ENCODE measurements at regions of chr1 and their contacts with region 1.

Region 1: DNA sequence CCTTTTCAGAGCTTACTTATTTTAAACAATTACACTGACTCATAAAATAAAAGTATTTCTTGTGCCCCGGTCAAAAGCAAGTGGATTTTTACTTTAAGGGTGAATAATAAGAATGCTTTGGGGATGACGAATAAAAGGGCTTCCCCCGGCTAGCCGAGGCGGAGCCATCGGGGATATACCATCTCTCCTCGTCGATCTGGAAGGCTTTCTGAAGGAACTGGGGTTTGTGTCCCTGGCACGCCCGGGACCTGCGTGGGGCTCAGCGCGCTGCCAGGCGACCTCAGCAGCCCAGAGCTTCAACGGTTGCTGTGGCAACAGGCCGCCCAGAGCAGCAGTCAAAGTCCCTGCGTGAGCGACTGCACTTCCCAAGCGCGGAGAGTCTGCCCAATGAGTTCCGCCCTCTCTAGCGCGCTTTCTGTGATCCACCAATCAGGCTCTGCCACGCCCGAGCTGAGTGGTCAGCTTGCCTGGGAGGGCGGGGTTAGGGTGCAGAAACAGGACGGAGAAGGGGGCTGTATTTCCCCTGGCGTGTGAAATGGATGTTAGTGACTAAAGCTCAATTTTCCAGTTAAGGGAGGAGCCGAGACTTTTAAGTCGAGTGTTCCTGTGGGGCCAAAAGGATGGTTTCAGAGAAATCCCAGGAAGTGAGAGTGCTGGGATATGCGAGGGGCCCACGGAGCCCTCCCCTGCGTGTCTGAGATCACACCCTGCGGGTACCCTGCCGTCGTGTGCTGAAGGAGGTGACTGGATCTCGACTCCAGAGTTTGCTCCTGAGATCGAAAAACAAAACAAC is 33.0 kb upstream of the MGST3 start:
- DNase-seq: peak; percentile 98
- H3K4me3 ChIP-seq: peak overlapping the region; percentile 50 to 57 (median 53)
- H3K27ac ChIP-seq: peak overlapping the region; percentile 66 to 76 (median 74)
- H3K4me1 ChIP-seq: peaks cover 0 to 12% (median 5%) of the 10 kb centered on the region in 4 donors
- H3K27me3 ChIP-seq: peaks cover 0 to 11% (median 0%) of the 10 kb centered on the region in 3 donors
- CTCF ChIP-seq: no peak
- EP300 ChIP-seq: no peak
- POLR2A ChIP-seq: peak in 1 of 2 donors; percentile 39

Region 2: GRCh38 chr1:165367375-165367993 is 230.6 kb before region 1 on chr1:
- intact Hi-C with region 1: loop called (anchors 2 kb)
- DNase-seq: peak; percentile 90
- H3K4me3 ChIP-seq: no peak overlapping the region
- H3K27ac ChIP-seq: no peak overlapping the region
- H3K4me1 ChIP-seq: peaks cover 0 to 8% (median 4%) of the 10 kb centered on the region in 4 donors
- H3K27me3 ChIP-seq: no peaks in the 10 kb centered on the region
- CTCF ChIP-seq: peak; percentile 51 to 98 (median 82)
- EP300 ChIP-seq: no peak
- POLR2A ChIP-seq: no peak

Region 3: GRCh38 chr1:165630629-165631341 is 32.7 kb after region 1 on chr1 and contains the start of gene MGST3:
- intact Hi-C with region 1: loop called (anchors 1 kb)
- DNase-seq: peak; percentile 97
- H3K4me3 ChIP-seq: peak within 1 kb of the TSS; percentile 55 to 88 (median 74)
- H3K27ac ChIP-seq: peak within 1 kb of the TSS; percentile 81 to 93 (median 90)
- H3K4me1 ChIP-seq: peaks cover 0 to 46% (median 40%) of the 10 kb centered on the region in 4 donors
- H3K27me3 ChIP-seq: no peaks in the 10 kb centered on the region
- CTCF ChIP-seq: no peak
- EP300 ChIP-seq: no peak
- POLR2A ChIP-seq: peak; percentile 78 to 81
- total RNA-seq, gene MGST3: 162 to 269 (median 201) TPM

Region 4: DNA sequence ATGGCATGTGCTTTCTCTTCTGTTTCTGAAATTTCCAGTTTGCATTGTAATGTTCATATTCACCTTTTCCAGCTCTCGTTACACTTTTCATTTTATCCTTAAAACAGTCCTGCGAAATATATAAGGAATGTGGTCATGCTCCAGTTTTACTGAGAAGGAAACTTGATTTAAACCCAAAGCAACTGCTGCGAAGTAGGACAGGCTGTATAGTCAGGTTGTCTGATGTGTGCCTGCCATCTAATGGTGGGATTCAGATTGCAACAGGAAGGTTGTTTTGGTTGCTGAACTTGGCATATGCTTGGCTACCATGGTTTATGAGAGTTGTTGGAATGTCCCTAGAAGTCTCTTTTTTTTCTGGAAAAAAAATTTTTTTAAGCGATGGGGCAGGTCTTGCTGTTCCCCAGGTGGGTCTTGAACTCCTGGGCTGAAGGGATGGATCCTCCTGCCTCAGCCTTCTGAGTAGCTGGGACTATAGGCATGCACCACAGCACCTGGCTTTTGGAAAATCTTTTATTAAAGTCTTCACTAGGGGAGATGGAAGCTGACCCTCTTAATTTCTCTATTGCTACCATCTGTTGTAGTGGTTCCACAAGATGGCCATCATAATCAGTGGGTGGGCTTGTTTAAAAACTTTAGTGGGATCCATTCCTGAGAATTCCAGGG is 316.2 kb after region 1 on chr1:
- intact Hi-C with region 1: loop called (anchors 1 kb)
- DNase-seq: peak; percentile 69
- H3K4me3 ChIP-seq: no peak overlapping the region
- H3K27ac ChIP-seq: no peak overlapping the region
- H3K4me1 ChIP-seq: peaks cover 0 to 6% (median 0%) of the 10 kb centered on the region in 4 donors
- H3K27me3 ChIP-seq: no peaks in the 10 kb centered on the region
- CTCF ChIP-seq: peak; percentile 78 to 89 (median 88)
- EP300 ChIP-seq: no peak
- POLR2A ChIP-seq: no peak

Measured in sigmoid colon (tissue), 7 donors.